ENCODE measurements at regions of chr7 and their contacts with region 1.

Region 1: GRCh38 chr7:149090397-149091195 is at the start of gene ZNF786:
- DNase-seq: peak; percentile 97
- H3K4me3 Mint-ChIP-seq: peak within 1 kb of the TSS; percentile 98
- H3K27ac Mint-ChIP-seq: peak within 1 kb of the TSS; percentile 100
- H3K4me1 Mint-ChIP-seq: peaks cover 15% of the 10 kb centered on the region
- H3K27me3 Mint-ChIP-seq: no peaks in the 10 kb centered on the region
- total RNA-seq, gene ZNF786: 10.2 and 10.3 TPM in 2 replicates

Region 2: GRCh38 chr7:148884299-148885022 is 206.1 kb before region 1 on chr7:
- intact Hi-C with region 1: loop called (anchors 1 kb)
- DNase-seq: peak; percentile 99
- H3K4me3 Mint-ChIP-seq: peak overlapping the region; percentile 93
- H3K27ac Mint-ChIP-seq: peak overlapping the region; percentile 99
- H3K4me1 Mint-ChIP-seq: peaks cover 26% of the 10 kb centered on the region
- H3K27me3 Mint-ChIP-seq: no peaks in the 10 kb centered on the region

Region 3: GRCh38 chr7:148987010-148987750 is 103.4 kb before region 1 on chr7:
- intact Hi-C with region 1: loop called (anchors 1 kb)
- DNase-seq: peak; percentile 94
- H3K4me3 Mint-ChIP-seq: peak overlapping the region; percentile 95
- H3K27ac Mint-ChIP-seq: peak overlapping the region; percentile 94
- H3K4me1 Mint-ChIP-seq: peaks cover 41% of the 10 kb centered on the region
- H3K27me3 Mint-ChIP-seq: peaks cover 23% of the 10 kb centered on the region

Region 4: DNA sequence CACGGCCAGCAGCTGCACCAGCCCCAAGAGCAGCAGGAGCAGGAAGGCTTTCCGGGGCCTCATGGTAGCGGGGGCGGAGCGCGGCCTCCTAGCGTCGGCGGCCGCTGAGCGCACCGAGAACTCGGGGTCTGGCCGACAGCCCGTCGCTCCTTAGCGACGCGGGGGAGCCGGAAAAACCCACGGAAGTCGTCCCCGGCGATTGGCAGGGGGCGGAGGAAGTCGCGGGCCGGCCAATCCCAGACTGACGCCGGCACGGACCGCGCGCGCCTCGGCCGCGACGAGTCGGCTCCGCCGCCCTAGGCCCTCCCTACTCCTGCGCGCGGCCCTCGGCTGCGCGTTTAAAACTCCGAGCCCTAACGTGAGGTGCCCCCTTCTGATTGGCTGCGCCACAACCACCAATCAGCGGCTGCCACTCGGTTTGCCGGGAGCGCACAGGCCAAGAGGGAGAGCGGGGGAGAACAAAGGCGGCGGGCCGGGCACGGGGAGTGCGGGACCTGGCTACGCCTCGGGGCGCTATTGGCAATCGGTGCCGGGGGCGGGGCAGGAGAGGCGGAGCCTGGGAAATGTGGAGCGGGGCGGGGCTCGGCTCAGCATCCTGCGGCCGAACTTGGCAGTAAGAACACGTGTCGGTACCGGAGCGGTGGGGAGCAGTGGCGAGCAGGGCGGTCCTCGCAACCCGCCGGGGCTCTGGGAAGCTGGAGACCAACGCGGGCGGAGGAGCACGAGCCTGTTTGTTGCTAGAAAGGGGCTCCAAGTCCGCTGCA is 62.1 kb before region 1 on chr7 and contains the start of gene PDIA4:
- intact Hi-C with region 1: loop called (anchors 1 kb)
- DNase-seq: peak; percentile 100
- H3K4me3 Mint-ChIP-seq: peak within 1 kb of the TSS; percentile 99
- H3K27ac Mint-ChIP-seq: peak within 1 kb of the TSS; percentile 95
- H3K4me1 Mint-ChIP-seq: peaks cover 33% of the 10 kb centered on the region
- H3K27me3 Mint-ChIP-seq: peaks cover 6% of the 10 kb centered on the region
- total RNA-seq, gene PDIA4: 137 and 138 TPM in 2 replicates

Region 5: DNA sequence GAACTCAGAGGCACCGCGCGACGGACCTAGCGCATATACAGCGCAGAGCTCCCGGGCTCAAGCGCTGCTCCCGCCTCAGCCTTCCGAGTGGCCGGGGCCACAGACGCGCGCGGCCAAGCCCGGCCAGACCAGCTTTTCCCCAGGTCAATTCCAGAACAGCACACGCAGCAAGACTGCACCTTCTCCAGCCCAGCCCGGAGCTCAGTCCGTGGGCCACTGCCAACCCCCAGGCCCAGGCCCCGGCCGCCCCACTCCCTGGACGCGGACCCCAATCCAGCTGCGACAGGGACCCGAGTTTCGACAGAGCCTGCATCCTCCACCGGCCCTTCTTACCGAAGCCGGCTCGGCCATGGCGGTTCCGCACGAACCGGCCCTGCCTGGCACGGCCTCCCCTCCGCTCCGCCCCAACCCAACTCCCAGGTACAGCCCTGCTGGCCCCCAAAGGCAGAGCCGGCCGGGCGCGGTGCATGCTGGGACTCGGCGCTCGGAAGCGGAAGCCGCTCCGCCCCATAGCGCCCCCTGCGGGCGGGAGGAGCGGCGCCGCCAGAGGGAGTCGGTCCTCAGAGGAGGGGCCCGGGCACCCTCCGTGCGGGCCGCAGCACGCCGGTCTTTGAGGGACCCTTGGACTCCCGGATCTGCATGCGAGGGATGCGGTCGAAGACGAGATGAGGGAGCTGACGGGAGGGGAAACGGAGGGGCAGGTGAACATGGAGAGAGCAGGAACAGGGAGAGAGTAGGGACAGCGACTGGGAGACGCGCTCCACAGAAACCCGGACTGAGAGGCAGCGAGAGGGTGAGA is 35.5 kb after region 1 on chr7 and contains the start of gene ZNF425:
- intact Hi-C with region 1: loop called (anchors 1 kb)
- DNase-seq: peak; percentile 99
- H3K4me3 Mint-ChIP-seq: peak within 1 kb of the TSS; percentile 90
- H3K27ac Mint-ChIP-seq: peak within 1 kb of the TSS; percentile 98
- H3K4me1 Mint-ChIP-seq: peaks cover 18% of the 10 kb centered on the region
- H3K27me3 Mint-ChIP-seq: no peaks in the 10 kb centered on the region
- total RNA-seq, gene ZNF425: 0.44 and 0.92 TPM in 2 replicates